OCI-LY7 (cell line): ENCODE measurements at regions of chr11 and their contacts with region 1.

Region 1: DNA sequence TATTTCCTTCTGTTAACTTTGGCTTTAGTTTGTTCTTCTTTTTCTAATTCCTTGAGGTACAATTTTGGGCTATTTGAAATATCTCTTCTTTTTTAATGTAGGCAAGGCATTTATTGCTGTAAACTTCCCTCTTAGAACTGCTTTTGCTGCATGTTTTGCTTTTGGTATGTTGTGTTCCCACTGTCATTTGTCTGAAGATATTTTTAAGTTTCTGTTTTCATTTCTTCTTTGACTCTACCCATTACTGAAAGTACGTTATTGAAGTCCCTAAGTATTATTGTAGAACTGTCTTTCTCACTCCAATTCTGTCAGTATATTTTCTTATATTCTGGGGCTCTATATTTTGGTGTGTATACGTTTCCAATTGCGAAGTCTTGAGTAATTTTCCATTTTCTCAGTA is 77.9 kb downstream of the KCNQ1OT1 start:
- DNase-seq: no peak
- H3K4me3 ChIP-seq: no peak overlapping the region
- H3K27ac ChIP-seq: no peak overlapping the region
- H3K4me1 ChIP-seq: no peaks in the 10 kb centered on the region
- CTCF ChIP-seq: no peak

Region 2: GRCh38 chr11:2643746-2644145 is 21.9 kb after region 1 on chr11:
- CTCF ChIA-PET with region 1: no interaction called
- POLR2A ChIA-PET with region 1: interaction called, 3 read pairs
- intact Hi-C with region 1: loop called (anchors 2 kb)
- DNase-seq: no peak
- H3K4me3 ChIP-seq: no peak overlapping the region
- H3K27ac ChIP-seq: no peak overlapping the region
- H3K4me1 ChIP-seq: no peaks in the 10 kb centered on the region
- CTCF ChIP-seq: no peak